ENCODE measurements at regions of chr12 and their contacts with region 1.

Region 1: GRCh38 chr12:132560614-132561426 is 49.6 kb downstream of the LRCOL1 start:
- DNase-seq: peak; percentile 93
- H3K4me3 ChIP-seq: peak overlapping the region; percentile 77
- H3K27ac ChIP-seq: peak overlapping the region; percentile 85
- H3K4me1 ChIP-seq: peaks cover 7% of the 10 kb centered on the region
- H3K27me3 ChIP-seq: no peaks in the 10 kb centered on the region
- CTCF ChIP-seq: peak; percentile 96

Region 2: GRCh38 chr12:132117558-132117875 is 443.3 kb before region 1 on chr12:
- CTCF ChIA-PET with region 1: interaction called, 11 read pairs
- POLR2A ChIA-PET with region 1: no interaction called
- intact Hi-C with region 1: no loop called
- DNase-seq: no peak
- H3K4me3 ChIP-seq: no peak overlapping the region
- H3K27ac ChIP-seq: no peak overlapping the region
- H3K4me1 ChIP-seq: no peaks in the 10 kb centered on the region
- H3K27me3 ChIP-seq: no peaks in the 10 kb centered on the region
- CTCF ChIP-seq: no peak

Region 3: GRCh38 chr12:132356691-132357622 is 203.9 kb before region 1 on chr12:
- CTCF ChIA-PET with region 1: no interaction called
- POLR2A ChIA-PET with region 1: no interaction called
- intact Hi-C with region 1: no loop called
- DNase-seq: peak; percentile 90
- H3K4me3 ChIP-seq: no peak overlapping the region
- H3K27ac ChIP-seq: peak overlapping the region; percentile 67
- H3K4me1 ChIP-seq: peaks cover 34% of the 10 kb centered on the region
- H3K27me3 ChIP-seq: no peaks in the 10 kb centered on the region
- CTCF ChIP-seq: no peak

Region 4: GRCh38 chr12:132591107-132591935 is 30.5 kb after region 1 on chr12:
- CTCF ChIA-PET with region 1: no interaction called
- POLR2A ChIA-PET with region 1: interaction called, 11 read pairs
- intact Hi-C with region 1: no loop called
- DNase-seq: no peak
- H3K4me3 ChIP-seq: no peak overlapping the region
- H3K27ac ChIP-seq: no peak overlapping the region
- H3K4me1 ChIP-seq: no peaks in the 10 kb centered on the region
- H3K27me3 ChIP-seq: no peaks in the 10 kb centered on the region
- CTCF ChIP-seq: no peak

Measured in A673 (cell line).